ENCODE measurements at regions of chr4 and their contacts with region 1.

Region 1: GRCh38 chr4:71009890-71010588 is 16.6 kb downstream of the DCK start:
- DNase-seq: no peak
- ATAC-seq: peak in 4 of 8 donors; percentile 46 to 57 (median 50)
- H3K4me3 ChIP-seq: no peak overlapping the region
- H3K27ac ChIP-seq: no peak overlapping the region
- H3K4me1 ChIP-seq: peaks cover 0 to 23% (median 0%) of the 10 kb centered on the region in 9 donors
- H3K27me3 ChIP-seq: no peaks in the 10 kb centered on the region
- CTCF ChIP-seq: peak; percentile 47 to 78 (median 67)

Region 2: GRCh38 chr4:70326052-70326451 is 684.0 kb before region 1 on chr4:
- intact Hi-C with region 1: no loop called
- DNase-seq: no peak
- ATAC-seq: no peak
- H3K4me3 ChIP-seq: no peak overlapping the region
- H3K27ac ChIP-seq: no peak overlapping the region
- H3K4me1 ChIP-seq: no peaks in the 10 kb centered on the region
- H3K27me3 ChIP-seq: no peaks in the 10 kb centered on the region
- CTCF ChIP-seq: no peak

Region 3: GRCh38 chr4:70651864-70652506 is 358.1 kb before region 1 on chr4:
- intact Hi-C with region 1: loop called in 8 of 10 experiments (anchors 1 to 10 kb)
- DNase-seq: no peak
- ATAC-seq: peak in 5 of 8 donors; percentile 38 to 68 (median 48)
- H3K4me3 ChIP-seq: no peak overlapping the region
- H3K27ac ChIP-seq: no peak overlapping the region
- H3K4me1 ChIP-seq: peaks cover 0 to 3% (median 0%) of the 10 kb centered on the region in 9 donors
- H3K27me3 ChIP-seq: peaks cover 0 to 5% (median 0%) of the 10 kb centered on the region in 7 donors
- CTCF ChIP-seq: peak; percentile 28 to 72 (median 58)

Measured in heart right ventricle (tissue), 16 donors.